ENCODE measurements at regions of chr4 and their contacts with region 1.

Region 1: GRCh38 chr4:53889326-53890055 is 174.9 kb downstream of the CHIC2 start:
- DNase-seq: no peak
- H3K4me3 ChIP-seq: no peak overlapping the region
- H3K27ac ChIP-seq: no peak overlapping the region
- H3K4me1 ChIP-seq: no peaks in the 10 kb centered on the region
- H3K27me3 ChIP-seq: no peaks in the 10 kb centered on the region
- CTCF ChIP-seq: no peak

Region 2: DNA sequence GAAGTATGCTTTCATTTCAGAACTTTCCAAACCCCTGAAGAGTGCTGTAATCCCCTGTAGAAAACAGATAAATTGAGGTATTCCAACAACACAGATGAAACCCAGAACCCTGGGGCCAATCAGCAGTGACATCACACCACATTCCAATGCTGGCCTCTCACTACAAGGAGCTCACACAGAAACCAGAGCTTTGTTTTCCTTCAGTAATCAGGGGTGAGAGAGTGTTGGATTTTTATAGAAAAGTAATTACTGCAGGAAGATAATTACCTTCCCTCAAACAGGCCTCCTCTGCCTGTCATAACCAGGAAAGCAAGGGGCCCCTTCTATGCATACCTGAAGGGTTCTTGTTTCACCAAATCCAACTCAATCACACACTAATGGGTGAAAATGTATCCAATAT is 769.8 kb before region 1 on chr4:
- CTCF ChIA-PET with region 1: no interaction called
- dilution Hi-C with region 1: loop called (anchors 5 kb)
- in situ Hi-C with region 1: no loop called
- intact Hi-C with region 1: no loop called
- DNase-seq: peak; percentile 65
- H3K4me3 ChIP-seq: no peak overlapping the region
- H3K27ac ChIP-seq: peak overlapping the region; percentile 56
- H3K4me1 ChIP-seq: peaks cover 16% of the 10 kb centered on the region
- H3K27me3 ChIP-seq: no peaks in the 10 kb centered on the region
- CTCF ChIP-seq: no peak

Region 3: DNA sequence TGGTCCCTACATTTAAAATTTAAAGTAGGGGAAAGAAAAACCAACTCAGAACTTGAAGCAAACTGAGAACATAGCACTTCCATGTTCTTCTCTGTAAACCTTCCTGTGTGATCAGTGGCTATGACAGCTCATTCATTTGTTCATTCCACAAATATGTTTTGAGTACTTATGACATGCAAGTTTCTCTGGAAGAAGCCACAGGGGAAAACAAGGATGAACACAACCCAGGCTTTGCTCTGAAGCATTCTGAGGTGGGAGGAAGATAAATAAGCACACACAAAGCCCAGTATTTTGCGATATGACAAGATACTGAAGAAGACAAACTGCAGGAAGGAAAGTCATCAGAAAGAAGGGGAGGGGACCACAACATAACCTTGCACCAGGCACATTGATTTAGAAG is 78.5 kb after region 1 on chr4:
- CTCF ChIA-PET with region 1: no interaction called
- dilution Hi-C with region 1: no loop called
- in situ Hi-C with region 1: no loop called
- intact Hi-C with region 1: no loop called
- DNase-seq: peak; percentile 38
- H3K4me3 ChIP-seq: no peak overlapping the region
- H3K27ac ChIP-seq: no peak overlapping the region
- H3K4me1 ChIP-seq: peaks cover 13% of the 10 kb centered on the region
- H3K27me3 ChIP-seq: no peaks in the 10 kb centered on the region
- CTCF ChIP-seq: no peak

Region 4: DNA sequence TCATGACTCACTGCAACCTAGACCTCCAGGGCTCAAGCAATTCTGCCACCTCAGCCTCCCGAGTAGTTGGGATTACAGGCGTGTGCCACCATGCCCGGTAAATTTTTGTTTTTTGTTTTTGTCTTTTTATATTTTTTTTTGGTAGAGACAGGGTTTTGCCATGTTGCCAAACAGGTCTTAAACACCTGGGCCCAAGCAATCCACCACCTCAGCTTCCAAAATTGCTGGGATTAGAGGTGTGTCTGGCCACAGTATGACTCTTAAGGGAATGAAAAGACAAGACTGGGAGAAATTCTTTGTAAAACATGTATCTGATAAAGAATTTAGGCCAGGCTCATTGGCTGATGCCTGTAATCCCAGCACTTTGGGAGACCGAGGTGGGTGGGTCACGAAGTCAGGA is 310.4 kb after region 1 on chr4:
- CTCF ChIA-PET with region 1: no interaction called
- dilution Hi-C with region 1: no loop called
- in situ Hi-C with region 1: no loop called
- intact Hi-C with region 1: no loop called
- DNase-seq: peak; percentile 15
- H3K4me3 ChIP-seq: no peak overlapping the region
- H3K27ac ChIP-seq: no peak overlapping the region
- H3K4me1 ChIP-seq: no peaks in the 10 kb centered on the region
- H3K27me3 ChIP-seq: no peaks in the 10 kb centered on the region
- CTCF ChIP-seq: no peak

Measured in mammary epithelial cell (primary cell).